ENCODE measurements at regions of chr20 and their contacts with region 1.

Region 1: DNA sequence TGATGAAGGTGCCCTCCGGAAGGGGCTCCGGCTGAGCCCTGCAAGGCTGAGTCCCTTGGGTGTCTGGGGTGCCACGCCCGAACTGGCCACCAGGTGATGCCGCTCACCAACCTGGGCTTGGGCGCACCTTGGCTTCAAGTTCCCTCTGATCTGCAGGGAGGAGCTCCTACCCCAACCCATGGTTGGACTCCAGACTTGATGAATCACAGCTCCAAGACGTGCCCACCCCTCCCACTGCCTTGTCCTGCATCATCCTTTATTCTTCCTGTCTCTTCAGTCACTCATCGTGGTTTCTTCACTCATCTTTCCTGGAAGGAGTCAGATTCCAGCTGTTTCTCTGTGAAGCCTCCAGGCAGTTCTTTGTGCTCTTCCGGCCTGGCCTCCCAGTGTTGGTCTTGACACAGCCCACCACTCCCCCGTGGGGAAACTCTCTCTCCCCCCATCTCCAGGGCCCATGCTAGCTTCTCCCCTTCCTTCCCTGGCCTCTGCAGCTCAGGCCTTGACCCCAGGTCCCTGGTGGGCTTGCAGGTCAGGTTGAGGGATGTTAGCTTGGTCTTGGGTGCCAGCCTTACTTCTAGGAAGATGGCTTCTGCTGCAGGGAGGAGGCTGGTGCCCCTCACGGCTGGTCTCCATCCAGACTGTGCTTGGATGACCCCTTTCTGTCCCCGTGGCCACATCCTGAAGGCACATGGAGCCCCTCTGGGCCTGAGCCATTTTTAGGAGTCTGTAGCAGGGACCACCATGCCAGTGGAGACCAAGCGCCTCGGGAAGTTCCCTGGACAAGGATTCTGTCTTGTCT is 2.6 kb upstream of the ZBP1 start:
- DNase-seq: peak in 8 of 9 donors; percentile 45 to 71 (median 66)
- ATAC-seq: peak; percentile 41
- H3K4me3 ChIP-seq: no peak overlapping the region
- H3K4me3 Mint-ChIP-seq: peak overlapping the region; percentile 10 to 89 (median 56)
- H3K27ac ChIP-seq: no peak overlapping the region
- H3K27ac Mint-ChIP-seq: peak overlapping the region; percentile 67 to 93 (median 84)
- H3K4me1 ChIP-seq: peaks cover 50 to 75% of the 10 kb centered on the region in 2 donors
- H3K4me1 Mint-ChIP-seq: peaks cover 48 to 98% (median 78%) of the 10 kb centered on the region in 7 donors
- H3K27me3 ChIP-seq: no peaks in the 10 kb centered on the region
- H3K27me3 Mint-ChIP-seq: peaks cover 0 to 20% (median 0%) of the 10 kb centered on the region in 5 donors

Region 2: DNA sequence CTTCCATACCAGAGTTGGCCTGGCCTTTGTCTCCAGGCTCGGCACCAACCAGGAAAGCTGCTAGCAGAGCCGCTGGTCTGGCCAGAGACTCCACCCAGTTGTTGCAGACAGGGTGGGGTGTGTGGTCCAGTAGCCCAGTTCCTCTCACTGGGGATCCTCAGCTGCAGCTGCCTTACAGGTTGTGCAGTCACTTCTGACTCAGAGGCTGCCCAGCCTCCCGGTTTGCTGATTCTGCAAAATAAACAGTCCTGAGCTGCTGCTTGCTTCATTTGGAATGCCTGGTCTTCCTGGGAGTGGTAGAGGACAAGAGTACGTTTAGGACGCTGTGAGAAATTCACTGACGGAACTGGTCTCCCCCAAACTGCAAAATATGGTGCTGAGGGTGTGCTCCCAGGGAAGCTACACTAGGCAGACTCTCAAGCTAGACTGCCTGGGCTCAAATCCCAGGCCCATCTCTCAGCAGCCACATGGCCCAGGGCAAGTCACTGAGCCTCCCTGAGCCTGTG is 747.7 kb before region 1 on chr20:
- CTCF ChIA-PET with region 1: no interaction called
- POLR2A ChIA-PET with region 1: no interaction called
- intact Hi-C with region 1: no loop called
- DNase-seq: no peak
- ATAC-seq: no peak
- H3K4me3 ChIP-seq: no peak overlapping the region
- H3K4me3 Mint-ChIP-seq: no peak overlapping the region
- H3K27ac ChIP-seq: no peak overlapping the region
- H3K27ac Mint-ChIP-seq: no peak overlapping the region
- H3K4me1 ChIP-seq: no peaks in the 10 kb centered on the region
- H3K4me1 Mint-ChIP-seq: no peaks in the 10 kb centered on the region
- H3K27me3 ChIP-seq: peaks cover 0 to 2% of the 10 kb centered on the region in 2 donors
- H3K27me3 Mint-ChIP-seq: peaks cover 0 to 18% (median 9%) of the 10 kb centered on the region in 5 donors

Region 3: DNA sequence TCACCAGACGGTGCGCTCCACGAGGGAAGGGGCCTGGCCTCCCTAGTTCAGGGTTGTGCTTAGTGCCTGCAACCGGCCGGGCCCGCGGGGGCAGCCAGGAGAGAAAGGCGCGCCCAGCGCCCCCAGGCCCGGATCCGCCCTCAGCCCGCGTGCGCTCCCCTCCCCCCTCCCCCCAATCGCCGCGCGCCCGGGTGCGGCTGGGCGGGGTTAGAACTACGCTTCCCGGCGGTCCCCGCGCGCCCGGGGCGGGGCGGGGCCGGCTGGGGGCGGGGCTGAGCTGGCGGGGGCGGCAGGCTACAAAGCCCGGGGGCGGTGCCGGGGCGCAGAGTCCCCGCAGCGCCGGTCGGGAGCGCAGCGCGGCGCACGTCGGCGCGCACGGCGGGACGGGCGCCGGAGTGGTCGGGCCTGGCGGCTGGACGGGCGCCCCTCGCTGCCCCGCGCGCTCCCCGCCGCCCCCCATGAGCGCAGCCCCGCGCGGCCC is 231.7 kb before region 1 on chr20 and contains the start of gene RBM38:
- CTCF ChIA-PET with region 1: interaction called, 3 read pairs
- POLR2A ChIA-PET with region 1: interaction called, 24 read pairs
- intact Hi-C with region 1: loop called (anchors 1 kb)
- DNase-seq: peak; percentile 64 to 89 (median 71)
- ATAC-seq: peak; percentile 83
- H3K4me3 ChIP-seq: peak within 1 kb of the TSS; percentile 99
- H3K4me3 Mint-ChIP-seq: peak within 1 kb of the TSS; percentile 90 to 99 (median 98)
- H3K27ac ChIP-seq: peak within 1 kb of the TSS; percentile 83
- H3K27ac Mint-ChIP-seq: peak within 1 kb of the TSS; percentile 92 to 100 (median 99)
- H3K4me1 ChIP-seq: peaks cover 45 to 47% of the 10 kb centered on the region in 2 donors
- H3K4me1 Mint-ChIP-seq: peaks cover 36 to 54% (median 45%) of the 10 kb centered on the region in 7 donors
- H3K27me3 ChIP-seq: no peaks in the 10 kb centered on the region
- H3K27me3 Mint-ChIP-seq: no peaks in the 10 kb centered on the region
- total RNA-seq, gene RBM38: 70.6 to 260 (median 127) TPM

Region 4: DNA sequence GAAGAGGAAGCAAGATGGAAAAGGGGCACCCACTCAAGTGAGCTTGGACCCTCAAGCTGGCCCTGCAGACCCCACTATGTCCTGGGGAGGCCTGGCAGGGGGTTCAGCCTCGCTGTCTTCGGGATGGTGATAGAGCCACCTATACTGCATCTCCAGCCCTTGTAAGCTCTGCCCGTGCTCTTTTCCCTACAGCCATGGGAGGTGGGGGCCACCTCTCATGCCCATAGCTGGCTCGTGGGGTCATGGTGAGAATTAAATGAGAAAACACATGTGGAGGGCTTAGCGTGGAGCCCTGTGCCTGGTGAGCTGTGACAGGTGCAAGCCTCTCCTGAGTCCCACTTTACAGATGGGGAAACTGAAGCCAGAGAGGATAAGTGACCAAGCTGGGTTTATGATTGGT is 34.2 kb before region 1 on chr20:
- CTCF ChIA-PET with region 1: no interaction called
- POLR2A ChIA-PET with region 1: no interaction called
- intact Hi-C with region 1: no loop called
- DNase-seq: no peak
- ATAC-seq: no peak
- H3K4me3 ChIP-seq: no peak overlapping the region
- H3K4me3 Mint-ChIP-seq: no peak overlapping the region
- H3K27ac ChIP-seq: no peak overlapping the region
- H3K27ac Mint-ChIP-seq: no peak overlapping the region
- H3K4me1 ChIP-seq: no peaks in the 10 kb centered on the region
- H3K4me1 Mint-ChIP-seq: peaks cover 0 to 6% (median 0%) of the 10 kb centered on the region in 7 donors
- H3K27me3 ChIP-seq: no peaks in the 10 kb centered on the region
- H3K27me3 Mint-ChIP-seq: peaks cover 9 to 27% (median 18%) of the 10 kb centered on the region in 5 donors

Region 5: GRCh38 chr20:57633945-57634491 is 11.2 kb after region 1 on chr20:
- CTCF ChIA-PET with region 1: interaction called, 38 read pairs
- POLR2A ChIA-PET with region 1: interaction called, 175 read pairs
- intact Hi-C with region 1: loop called (anchors 1 to 2 kb)
- DNase-seq: peak in 7 of 9 donors; percentile 25 to 68 (median 55)
- ATAC-seq: peak; percentile 67
- H3K4me3 ChIP-seq: no peak overlapping the region
- H3K4me3 Mint-ChIP-seq: peak overlapping the region; percentile 14 to 76 (median 52)
- H3K27ac ChIP-seq: no peak overlapping the region
- H3K27ac Mint-ChIP-seq: peak overlapping the region in 7 of 9 donors; percentile 13 to 70 (median 54)
- H3K4me1 ChIP-seq: peaks cover 25 to 31% of the 10 kb centered on the region in 2 donors
- H3K4me1 Mint-ChIP-seq: peaks cover 33 to 61% (median 56%) of the 10 kb centered on the region in 7 donors
- H3K27me3 ChIP-seq: no peaks in the 10 kb centered on the region
- H3K27me3 Mint-ChIP-seq: peaks cover 0 to 87% (median 0%) of the 10 kb centered on the region in 5 donors

Region 6: GRCh38 chr20:57680131-57680716 is 57.4 kb after region 1 on chr20:
- CTCF ChIA-PET with region 1: interaction called, 44 read pairs
- POLR2A ChIA-PET with region 1: interaction called, 6 read pairs
- intact Hi-C with region 1: loop called in 1 of 2 experiments (anchors 1 kb)
- DNase-seq: no peak
- ATAC-seq: peak; percentile 46
- H3K4me3 ChIP-seq: no peak overlapping the region
- H3K4me3 Mint-ChIP-seq: peak overlapping the region in 3 of 10 donors; percentile 26 to 48 (median 43)
- H3K27ac ChIP-seq: no peak overlapping the region
- H3K27ac Mint-ChIP-seq: peak overlapping the region in 1 of 9 donors; percentile 14
- H3K4me1 ChIP-seq: peaks cover 0 to 15% of the 10 kb centered on the region in 2 donors
- H3K4me1 Mint-ChIP-seq: peaks cover 0 to 49% (median 32%) of the 10 kb centered on the region in 7 donors
- H3K27me3 ChIP-seq: no peaks in the 10 kb centered on the region
- H3K27me3 Mint-ChIP-seq: peaks cover 0 to 11% (median 0%) of the 10 kb centered on the region in 5 donors

Region 7: GRCh38 chr20:58179432-58180099 is 556.8 kb after region 1 on chr20:
- CTCF ChIA-PET with region 1: interaction called, 3 read pairs
- POLR2A ChIA-PET with region 1: no interaction called
- intact Hi-C with region 1: loop called (anchors 1 kb)
- DNase-seq: peak; percentile 37 to 86 (median 71)
- ATAC-seq: peak; percentile 92
- H3K4me3 ChIP-seq: peak overlapping the region; percentile 54
- H3K4me3 Mint-ChIP-seq: peak overlapping the region; percentile 48 to 82 (median 71)
- H3K27ac ChIP-seq: no peak overlapping the region
- H3K27ac Mint-ChIP-seq: no peak overlapping the region
- H3K4me1 ChIP-seq: peaks cover 3 to 8% of the 10 kb centered on the region in 2 donors
- H3K4me1 Mint-ChIP-seq: peaks cover 0 to 17% (median 7%) of the 10 kb centered on the region in 7 donors
- H3K27me3 ChIP-seq: no peaks in the 10 kb centered on the region
- H3K27me3 Mint-ChIP-seq: peaks cover 9 to 28% (median 20%) of the 10 kb centered on the region in 5 donors

Region 8: DNA sequence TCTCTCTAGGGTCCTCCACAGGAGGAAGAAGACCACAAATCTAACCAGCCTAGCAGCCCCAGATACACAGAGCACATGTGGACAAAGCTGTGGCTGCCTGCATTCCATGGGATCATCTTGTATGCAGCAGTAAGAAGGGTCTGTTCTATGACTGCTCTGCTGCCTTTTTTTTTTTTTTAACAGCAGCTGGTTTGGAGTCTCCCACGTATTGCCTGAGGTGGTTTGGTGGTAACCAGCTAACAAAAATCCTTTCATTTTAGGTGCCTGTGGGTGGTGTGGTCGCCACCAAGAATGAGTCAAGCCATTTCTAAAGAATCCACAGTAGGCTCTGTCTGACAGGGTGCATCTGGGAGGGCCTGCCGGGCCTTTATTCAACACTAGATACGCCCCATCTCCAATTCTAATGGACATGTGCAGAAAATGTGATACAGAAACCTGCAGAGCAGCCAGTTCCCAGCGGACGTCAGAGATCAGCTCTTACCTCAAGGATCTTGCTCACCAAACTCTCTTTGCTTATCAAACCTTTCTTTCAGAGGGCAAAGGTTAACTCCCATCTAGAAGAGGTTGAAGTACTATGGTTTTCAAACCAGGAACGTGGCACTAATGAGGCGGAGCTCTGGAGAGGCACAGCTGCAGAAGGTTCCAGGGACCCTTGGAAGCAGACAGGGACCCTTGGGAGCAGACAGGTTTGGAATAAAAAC is 1196.0 kb after region 1 on chr20:
- CTCF ChIA-PET with region 1: no interaction called
- POLR2A ChIA-PET with region 1: no interaction called
- intact Hi-C with region 1: loop called in 1 of 2 experiments (anchors 5 kb)
- DNase-seq: peak in 1 of 9 donors; percentile 74
- ATAC-seq: no peak
- H3K4me3 ChIP-seq: no peak overlapping the region
- H3K4me3 Mint-ChIP-seq: no peak overlapping the region
- H3K27ac ChIP-seq: no peak overlapping the region
- H3K27ac Mint-ChIP-seq: no peak overlapping the region
- H3K4me1 ChIP-seq: no peaks in the 10 kb centered on the region
- H3K4me1 Mint-ChIP-seq: peaks cover 0 to 11% (median 0%) of the 10 kb centered on the region in 7 donors
- H3K27me3 ChIP-seq: no peaks in the 10 kb centered on the region
- H3K27me3 Mint-ChIP-seq: peaks cover 0 to 14% (median 4%) of the 10 kb centered on the region in 5 donors